ENCODE measurements at regions of chr13 and their contacts with region 1.

Region 1: GRCh38 chr13:78978381-78978998 is 319.5 kb upstream of the OBI1 start:
- DNase-seq: peak in 3 of 10 donors; percentile 9 to 30 (median 19)

Region 2: DNA sequence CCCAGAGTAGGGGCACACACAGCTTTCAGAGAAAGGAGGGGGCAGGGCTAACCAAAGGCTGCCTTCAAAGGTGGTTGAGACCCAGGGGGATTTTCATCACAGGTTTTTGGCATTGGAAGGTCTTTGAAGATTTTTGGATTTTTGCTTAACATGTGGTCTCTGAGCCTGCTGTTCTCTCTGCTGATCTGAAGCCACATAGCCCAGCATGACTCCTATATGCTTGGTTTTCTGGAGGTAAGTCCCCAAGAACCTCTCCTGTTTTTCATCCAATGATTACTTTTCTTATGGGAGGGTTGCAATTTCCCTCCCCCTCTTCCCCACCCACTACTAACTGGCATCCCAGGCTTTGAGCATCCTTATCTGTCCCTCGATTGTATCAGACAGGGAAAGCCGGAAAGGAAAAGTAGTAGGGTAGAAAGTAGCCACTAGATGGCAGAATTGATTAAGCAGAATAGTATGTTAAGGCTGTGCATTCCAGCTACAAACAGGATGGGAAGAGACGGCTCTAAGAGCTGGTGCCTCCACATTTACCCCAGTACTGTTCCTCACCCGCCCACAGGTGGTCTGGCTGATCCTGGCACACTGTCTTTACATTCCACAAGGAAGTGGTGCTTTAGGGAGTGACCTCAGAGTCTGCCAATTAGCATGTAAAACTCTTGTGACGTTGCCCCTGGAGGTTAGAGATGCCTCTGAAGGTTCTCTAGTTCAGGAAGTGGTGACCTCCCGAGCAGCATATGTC is 840.9 kb before region 1 on chr13:
- intact Hi-C with region 1: loop called (anchors 5 kb)
- DNase-seq: no peak

Region 3: DNA sequence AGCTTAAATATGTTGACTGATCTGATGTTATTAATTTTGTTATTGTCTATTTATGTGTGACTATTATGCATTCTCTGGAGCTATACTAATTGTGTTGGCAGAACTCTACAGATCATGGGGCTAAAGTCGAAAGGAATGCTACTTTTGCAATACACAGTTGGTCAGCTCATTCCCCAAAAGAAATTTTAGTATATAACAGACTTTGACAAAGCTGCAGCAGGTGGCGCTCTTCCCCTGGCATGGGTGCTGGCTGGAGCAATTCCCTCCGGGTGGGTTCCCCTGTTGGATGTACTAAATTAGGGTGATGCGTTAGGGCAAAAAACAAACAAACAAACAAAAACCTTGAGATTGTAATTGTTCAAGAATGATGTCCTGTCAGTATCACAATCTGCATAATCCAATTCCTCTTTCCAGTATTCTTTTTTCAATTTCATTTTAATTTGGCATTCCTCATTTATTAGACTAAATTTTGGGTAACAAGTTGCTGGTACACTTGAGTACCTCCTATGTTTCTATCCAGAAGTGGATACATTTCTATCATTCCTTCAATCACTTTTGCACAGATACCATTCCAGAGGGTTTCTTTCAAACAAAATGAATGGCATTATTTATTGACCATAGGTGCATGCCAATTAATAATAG is 737.1 kb before region 1 on chr13:
- intact Hi-C with region 1: loop called (anchors 5 kb)
- DNase-seq: peak in 8 of 10 donors; percentile 7 to 84 (median 18)

Region 4: DNA sequence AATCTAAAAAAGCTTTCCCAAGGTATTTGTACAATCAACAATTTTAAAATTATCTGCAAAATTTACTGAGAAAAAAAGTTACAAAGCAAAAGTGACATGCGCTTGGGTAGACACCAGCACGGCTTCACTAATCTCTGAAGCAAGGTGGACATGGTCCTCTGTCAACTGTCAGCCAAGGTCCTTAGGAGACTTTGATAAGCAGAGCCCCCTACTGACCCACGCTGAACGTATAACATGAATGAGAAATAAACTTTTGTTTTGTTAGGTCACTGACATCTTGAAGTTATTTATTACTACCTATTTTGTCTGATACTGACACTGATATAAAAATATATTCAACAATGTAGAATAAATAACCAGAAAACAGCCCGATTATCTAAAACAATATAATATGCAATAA is 218.8 kb before region 1 on chr13:
- intact Hi-C with region 1: no loop called
- DNase-seq: no peak

Region 5: GRCh38 chr13:79018166-79018565 is 39.7 kb after region 1 on chr13:
- intact Hi-C with region 1: no loop called
- DNase-seq: no peak

Measured in posterior cingulate gyrus (tissue), 11 donors.